Posterior cingulate gyrus (tissue), 11 donors: ENCODE measurements at regions of chr4 and their contacts with region 1.

Region 1: GRCh38 chr4:139177868-139178611 is 1.0 kb upstream of the ELF2 start:
- DNase-seq: peak; percentile 85 to 99 (median 92)

Region 2: GRCh38 chr4:139015269-139015947 is 162.6 kb before region 1 on chr4 and contains the start of gene NOCT:
- intact Hi-C with region 1: loop called (anchors 10 kb)
- DNase-seq: peak; percentile 74 to 97 (median 82)

Region 3: DNA sequence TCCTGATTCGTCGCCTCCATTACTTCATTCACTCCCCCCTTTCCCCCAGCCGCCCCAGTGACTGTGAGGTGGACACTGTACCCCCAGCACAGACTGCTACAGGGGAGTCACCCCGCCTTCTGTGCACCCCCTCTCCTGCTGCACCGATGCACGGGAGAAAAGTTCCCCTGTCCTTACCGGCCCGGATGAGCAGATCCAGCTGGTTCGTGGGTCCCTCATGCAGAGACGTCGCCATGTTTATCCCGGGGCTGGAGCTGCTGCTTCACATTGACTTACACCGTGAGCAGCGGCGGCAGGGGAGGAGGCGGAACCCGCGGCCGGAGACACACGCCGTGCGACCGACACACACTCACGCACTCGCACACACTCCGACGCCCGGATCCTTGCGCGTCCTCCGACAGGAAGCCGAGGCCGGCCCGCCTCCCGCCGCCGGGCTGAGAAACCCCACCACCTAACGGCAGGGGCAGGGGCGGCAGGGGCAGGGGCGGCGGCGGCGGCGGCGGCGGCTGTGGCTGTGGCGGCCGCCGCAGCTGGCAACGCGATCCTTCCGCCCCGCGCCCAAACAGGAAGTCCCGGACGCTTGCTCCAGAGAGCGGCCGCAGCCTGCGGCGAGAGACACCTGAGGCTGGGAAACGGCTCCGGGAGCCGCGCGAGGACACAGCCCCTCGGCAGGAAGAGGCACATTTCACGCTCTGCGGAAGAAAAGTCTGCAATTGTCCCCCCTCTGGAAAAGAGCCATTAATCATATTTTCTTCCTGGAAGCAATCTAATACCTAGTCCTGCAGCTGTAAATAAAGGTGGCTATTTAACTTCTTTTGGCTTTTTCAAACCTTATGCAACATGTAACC is 93.9 kb before region 1 on chr4:
- intact Hi-C with region 1: loop called (anchors 1 kb)
- DNase-seq: peak; percentile 68 to 98 (median 86)

Region 4: GRCh38 chr4:139099366-139099982 is 78.6 kb before region 1 on chr4:
- intact Hi-C with region 1: loop called (anchors 5 kb)
- DNase-seq: peak in 6 of 10 donors; percentile 58 to 92 (median 70)

Region 5: DNA sequence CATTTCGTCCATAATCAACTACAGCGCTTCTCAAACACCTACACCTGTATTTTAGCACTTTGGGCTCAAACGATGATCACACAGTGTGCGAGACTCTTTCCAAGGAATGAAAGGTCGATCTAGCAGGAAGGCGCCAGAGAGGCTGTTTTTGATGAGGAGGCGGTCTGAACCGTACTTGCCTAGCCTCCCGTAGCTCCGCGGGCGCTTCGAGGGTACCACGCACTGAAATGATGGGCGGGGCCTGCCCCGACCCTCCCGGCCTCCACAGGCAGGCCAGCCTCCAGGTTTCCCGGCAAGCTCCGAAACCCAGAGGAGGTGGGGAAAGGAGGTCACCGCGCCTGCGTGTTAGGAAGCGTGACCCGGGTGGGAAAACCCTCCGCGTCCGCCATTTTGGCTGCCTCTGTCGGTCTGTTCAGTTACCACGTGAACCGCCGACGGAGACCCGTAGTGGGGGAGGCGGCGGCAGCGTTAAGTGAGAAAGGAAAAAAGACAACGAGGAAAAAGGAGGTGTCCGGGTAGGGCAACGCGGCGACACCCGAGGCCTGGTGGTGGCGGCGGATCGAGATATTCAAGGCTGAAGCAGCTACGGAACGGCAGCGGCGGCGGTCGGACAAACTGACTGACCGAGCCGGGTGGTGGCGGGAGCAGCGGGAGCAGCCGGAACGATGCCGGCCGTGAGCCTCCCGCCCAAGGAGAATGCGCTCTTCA is 123.2 kb after region 1 on chr4 and contains the start of gene NAA15:
- intact Hi-C with region 1: loop called (anchors 1 kb)
- DNase-seq: peak; percentile 94 to 99 (median 97)

Region 6: GRCh38 chr4:139453371-139454110 is 275.5 kb after region 1 on chr4:
- intact Hi-C with region 1: loop called (anchors 10 kb)
- DNase-seq: peak; percentile 86 to 99 (median 91)

Region 7: GRCh38 chr4:139554893-139555704 is 377.1 kb after region 1 on chr4:
- intact Hi-C with region 1: loop called (anchors 5 kb)
- DNase-seq: peak; percentile 74 to 97 (median 82)